ENCODE measurements at regions of chr17 and their contacts with region 1.

Region 1: GRCh38 chr17:77109764-77110359 is 30.9 kb upstream of the SEC14L1 start:
- DNase-seq: no peak
- ATAC-seq: peak; percentile 58

Region 2: GRCh38 chr17:76983075-76983775 is 126.6 kb before region 1 on chr17:
- intact Hi-C with region 1: no loop called
- DNase-seq: no peak
- ATAC-seq: no peak

Region 3: GRCh38 chr17:77054936-77055335 is 54.9 kb before region 1 on chr17:
- intact Hi-C with region 1: no loop called
- DNase-seq: no peak
- ATAC-seq: no peak

Region 4: GRCh38 chr17:77140166-77140878 is 30.5 kb after region 1 on chr17:
- intact Hi-C with region 1: loop called (anchors 5 kb)
- DNase-seq: peak; percentile 100
- ATAC-seq: peak; percentile 98